HepG2 (cell line): ENCODE measurements at regions of chr4 and their contacts with region 1.

Region 1: GRCh38 chr4:38062088-38062893 is 102.1 kb downstream of the PTTG2 start:
- DNase-seq: peak; percentile 73
- ATAC-seq: peak; percentile 78
- H3K4me3 ChIP-seq: no peak overlapping the region
- H3K27ac ChIP-seq: peak overlapping the region; percentile 49
- H3K4me1 ChIP-seq: peaks cover 33% of the 10 kb centered on the region
- H3K27me3 ChIP-seq: no peaks in the 10 kb centered on the region
- CTCF ChIP-seq: peak; percentile 87
- EP300 ChIP-seq: peak in 1 of 2 experiments; percentile 26; a peak in 1 of 4 replicates
- POLR2A ChIP-seq: no peak
- RAD21 ChIP-seq: peak; percentile 78

Region 2: DNA sequence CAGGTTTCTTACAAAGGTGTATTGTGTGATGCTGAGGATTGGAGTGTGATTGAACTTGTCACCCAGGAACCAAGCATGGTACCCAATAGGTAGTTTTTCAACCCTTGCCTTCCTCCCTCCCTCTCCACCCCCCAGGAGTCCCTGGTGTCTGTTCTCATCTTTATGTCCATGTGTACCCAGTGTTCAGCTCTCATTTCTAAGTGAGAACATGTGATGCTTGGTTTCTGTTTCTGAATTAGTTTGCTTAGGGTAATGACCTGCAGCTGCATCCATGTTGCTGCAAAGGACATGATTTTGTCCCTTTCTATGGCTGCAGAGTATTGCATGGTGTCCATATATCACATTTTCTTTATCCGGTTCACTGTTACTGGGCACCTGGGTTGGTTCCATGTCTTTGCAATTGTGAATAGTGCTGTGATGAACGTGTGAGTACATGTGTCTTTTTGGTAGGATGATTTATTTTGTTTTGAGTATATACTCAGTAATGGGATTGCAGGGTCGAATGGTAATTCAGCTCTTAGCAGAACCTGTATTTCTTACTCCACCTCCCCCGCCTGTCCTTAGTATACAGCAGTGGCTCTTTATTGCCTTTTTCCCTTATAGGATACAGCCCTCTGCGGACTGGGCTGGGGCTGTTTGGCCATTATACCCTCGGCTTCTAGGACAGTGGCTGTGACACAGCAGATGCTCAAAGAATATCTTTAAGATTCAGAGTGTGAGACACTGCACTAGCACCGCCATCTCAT is 43.4 kb after region 1 on chr4:
- CTCF ChIA-PET with region 1: no interaction called
- POLR2A ChIA-PET with region 1: no interaction called
- in situ Hi-C with region 1: no loop called
- intact Hi-C with region 1: no loop called
- DNase-seq: no peak
- ATAC-seq: no peak
- H3K4me3 ChIP-seq: no peak overlapping the region
- H3K27ac ChIP-seq: no peak overlapping the region
- H3K4me1 ChIP-seq: peaks cover 25% of the 10 kb centered on the region
- H3K27me3 ChIP-seq: no peaks in the 10 kb centered on the region; a peak in 1 of 5 replicates
- CTCF ChIP-seq: no peak
- EP300 ChIP-seq: no peak
- POLR2A ChIP-seq: no peak
- RAD21 ChIP-seq: no peak

Region 3: GRCh38 chr4:38160487-38161207 is 98.4 kb after region 1 on chr4:
- CTCF ChIA-PET with region 1: no interaction called
- POLR2A ChIA-PET with region 1: no interaction called
- in situ Hi-C with region 1: no loop called
- intact Hi-C with region 1: loop called (anchors 2 kb)
- DNase-seq: peak; percentile 98
- ATAC-seq: peak; percentile 90
- H3K4me3 ChIP-seq: no peak overlapping the region
- H3K27ac ChIP-seq: peak overlapping the region; percentile 98
- H3K4me1 ChIP-seq: peaks cover 58% of the 10 kb centered on the region
- H3K27me3 ChIP-seq: no peaks in the 10 kb centered on the region
- CTCF ChIP-seq: no peak
- EP300 ChIP-seq: peak; percentile 95 to 98
- POLR2A ChIP-seq: no peak
- RAD21 ChIP-seq: peak; percentile 45; the same call in 1 of the 2 replicates

Region 4: GRCh38 chr4:38179690-38180377 is 117.5 kb after region 1 on chr4:
- CTCF ChIA-PET with region 1: interaction called, 15 read pairs
- POLR2A ChIA-PET with region 1: no interaction called
- in situ Hi-C with region 1: no loop called
- intact Hi-C with region 1: loop called (anchors 1 kb)
- DNase-seq: peak; percentile 65
- ATAC-seq: peak; percentile 88
- H3K4me3 ChIP-seq: no peak overlapping the region
- H3K27ac ChIP-seq: no peak overlapping the region
- H3K4me1 ChIP-seq: peaks cover 51% of the 10 kb centered on the region
- H3K27me3 ChIP-seq: no peaks in the 10 kb centered on the region
- CTCF ChIP-seq: peak; percentile 91
- EP300 ChIP-seq: peak in 1 of 2 experiments; percentile 45; a peak in 1 of 4 replicates
- POLR2A ChIP-seq: no peak
- RAD21 ChIP-seq: peak; percentile 95

Region 5: GRCh38 chr4:38319456-38320342 is 257.4 kb after region 1 on chr4:
- CTCF ChIA-PET with region 1: no interaction called
- POLR2A ChIA-PET with region 1: no interaction called
- in situ Hi-C with region 1: loop called (anchors 25 kb)
- intact Hi-C with region 1: no loop called
- DNase-seq: peak; percentile 75
- ATAC-seq: peak; percentile 86
- H3K4me3 ChIP-seq: 0 out of 6 replicates have a peak overlapping the region, but pooled peaks of 1 of the 3 experiments have one; percentile 8
- H3K27ac ChIP-seq: peak overlapping the region; percentile 28
- H3K4me1 ChIP-seq: peaks cover 33% of the 10 kb centered on the region
- H3K27me3 ChIP-seq: no peaks in the 10 kb centered on the region
- CTCF ChIP-seq: peak; percentile 95
- EP300 ChIP-seq: no peak
- POLR2A ChIP-seq: no peak
- RAD21 ChIP-seq: peak; percentile 93

Region 6: DNA sequence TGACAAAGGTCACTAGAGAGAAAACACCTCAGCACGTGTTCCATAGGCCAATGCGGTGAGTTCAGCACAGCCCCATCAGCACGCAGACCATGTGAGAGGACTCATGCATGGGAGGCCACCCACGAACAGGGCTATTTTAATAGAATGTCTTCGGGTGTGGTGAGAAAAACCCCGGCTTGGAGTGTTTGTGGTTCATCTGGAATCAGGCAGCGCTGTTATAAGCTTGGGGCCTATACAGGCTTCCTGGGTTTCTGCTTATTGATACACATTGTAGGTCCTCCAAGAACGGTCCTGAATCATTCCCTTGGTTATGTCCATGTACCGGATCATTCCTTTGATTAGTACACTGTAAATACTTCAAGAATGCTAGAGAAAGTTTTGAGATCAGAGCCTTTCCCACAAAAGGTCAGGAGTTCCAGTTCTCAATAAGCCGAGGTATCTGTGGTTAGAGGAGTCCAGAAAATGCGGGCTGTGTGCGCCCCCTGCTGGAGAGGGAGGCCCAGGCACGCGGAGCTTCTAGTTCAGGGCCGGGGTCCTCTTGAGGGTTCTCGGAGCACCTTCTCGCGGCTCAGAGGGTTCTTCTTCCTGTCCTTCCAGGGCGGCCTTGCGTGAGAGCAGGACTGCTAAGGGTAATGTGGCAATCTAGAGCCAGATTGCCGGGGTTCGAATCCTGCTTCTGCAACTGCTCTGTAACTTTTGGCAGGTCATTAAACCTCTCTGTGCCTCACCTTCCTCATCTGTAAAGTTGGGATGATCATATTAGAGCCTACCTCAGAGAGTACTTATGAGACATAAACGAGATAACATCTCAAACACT is 668.7 kb after region 1 on chr4:
- CTCF ChIA-PET with region 1: interaction called, 20 read pairs
- POLR2A ChIA-PET with region 1: no interaction called
- in situ Hi-C with region 1: loop called (anchors 10 kb)
- intact Hi-C with region 1: loop called (anchors 1 kb)
- DNase-seq: peak; percentile 66
- ATAC-seq: peak; percentile 93
- H3K4me3 ChIP-seq: peak overlapping the region in 1 of 3 experiments; percentile 30; a peak in 1 of 6 replicates
- H3K27ac ChIP-seq: no peak overlapping the region
- H3K4me1 ChIP-seq: peaks cover 27% of the 10 kb centered on the region
- H3K27me3 ChIP-seq: no peaks in the 10 kb centered on the region
- CTCF ChIP-seq: peak; percentile 95
- EP300 ChIP-seq: no peak
- POLR2A ChIP-seq: no peak
- RAD21 ChIP-seq: peak; percentile 89